HepG2 (cell line): ENCODE measurements at regions of chr14 and their contacts with region 1.

Region 1: DNA sequence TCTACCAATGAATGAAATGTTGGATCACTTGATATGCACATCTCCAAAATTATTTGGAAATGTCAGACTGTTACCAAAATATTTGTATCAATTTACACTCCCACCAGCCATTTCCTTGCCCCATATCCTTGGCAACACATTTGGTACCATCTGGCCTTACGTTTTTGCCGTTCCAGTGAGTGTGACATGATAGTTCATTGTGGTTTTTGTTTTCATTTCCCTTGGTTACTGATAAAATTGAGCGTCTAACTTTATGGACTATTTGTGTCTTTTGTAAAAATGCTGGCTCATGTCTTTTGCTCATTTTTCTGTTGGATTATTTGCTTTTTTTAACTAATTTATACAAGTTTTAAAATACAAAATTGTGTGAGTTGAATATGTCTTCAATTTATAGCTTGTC is 11.0 kb downstream of the KLHDC1 start:
- DNase-seq: no peak
- ATAC-seq: no peak
- H3K4me3 ChIP-seq: no peak overlapping the region
- H3K27ac ChIP-seq: no peak overlapping the region
- H3K4me1 ChIP-seq: peaks cover 18% of the 10 kb centered on the region
- H3K27me3 ChIP-seq: no peaks in the 10 kb centered on the region; a peak in 1 of 5 replicates
- CTCF ChIP-seq: no peak
- EP300 ChIP-seq: no peak
- POLR2A ChIP-seq: no peak
- RAD21 ChIP-seq: no peak

Region 2: GRCh38 chr14:49720744-49721143 is 16.8 kb after region 1 on chr14:
- CTCF ChIA-PET with region 1: no interaction called
- POLR2A ChIA-PET with region 1: no interaction called
- in situ Hi-C with region 1: no loop called
- intact Hi-C with region 1: no loop called
- DNase-seq: no peak
- ATAC-seq: no peak
- H3K4me3 ChIP-seq: no peak overlapping the region
- H3K27ac ChIP-seq: no peak overlapping the region
- H3K4me1 ChIP-seq: peaks cover 21% of the 10 kb centered on the region
- H3K27me3 ChIP-seq: no peaks in the 10 kb centered on the region
- CTCF ChIP-seq: no peak
- EP300 ChIP-seq: no peak
- POLR2A ChIP-seq: no peak
- RAD21 ChIP-seq: no peak

Region 3: DNA sequence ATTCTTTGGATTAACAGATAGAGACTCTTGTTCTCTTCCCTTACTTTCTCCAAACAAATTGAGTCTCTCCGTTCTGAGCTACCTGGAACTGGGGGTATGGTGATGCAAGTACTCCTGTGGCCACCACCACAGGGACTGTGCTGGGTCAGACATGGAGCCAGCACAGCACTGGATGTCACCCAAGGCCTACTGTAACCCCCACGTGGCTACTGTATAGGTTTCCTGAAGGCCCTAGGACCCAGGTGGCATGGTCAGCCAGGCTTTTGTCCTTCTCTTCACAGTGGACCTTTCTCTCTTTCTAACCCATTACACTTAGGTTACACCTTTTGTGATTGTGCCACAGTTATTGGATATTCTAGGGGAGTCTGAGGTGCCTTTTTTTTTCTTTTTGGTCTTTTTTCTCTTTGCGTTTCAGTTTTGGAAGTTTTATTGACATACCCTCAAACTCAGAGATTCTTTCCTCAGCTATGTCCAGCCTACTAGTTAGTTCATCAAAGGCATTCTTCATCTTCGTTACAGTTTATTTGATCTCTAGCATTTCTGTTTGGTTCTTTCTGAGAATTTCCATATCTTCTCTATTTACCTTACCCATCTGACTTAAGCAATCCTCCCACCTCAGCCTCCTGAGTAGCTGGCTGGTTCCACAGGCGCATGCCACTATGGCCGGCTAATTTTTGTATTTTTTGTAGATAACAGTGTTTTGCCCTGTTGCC is 58.0 kb after region 1 on chr14:
- CTCF ChIA-PET with region 1: no interaction called
- POLR2A ChIA-PET with region 1: no interaction called
- in situ Hi-C with region 1: loop called (anchors 10 kb)
- intact Hi-C with region 1: loop called (anchors 5 kb)
- DNase-seq: peak; percentile 74
- ATAC-seq: peak; percentile 88
- H3K4me3 ChIP-seq: peak overlapping the region in 1 of 3 experiments; percentile 37; a peak in 2 of 6 replicates
- H3K27ac ChIP-seq: peak overlapping the region; percentile 19
- H3K4me1 ChIP-seq: peaks cover 37% of the 10 kb centered on the region
- H3K27me3 ChIP-seq: no peaks in the 10 kb centered on the region
- CTCF ChIP-seq: 0 out of 2 replicates have a peak, but pooled peaks have one; percentile 11
- EP300 ChIP-seq: peak in 1 of 2 experiments; percentile 49; a peak in 1 of 4 replicates
- POLR2A ChIP-seq: no peak
- RAD21 ChIP-seq: no peak